KBM-7 (cell line): ENCODE measurements at regions of chr3 and their contacts with region 1.

Region 1: GRCh38 chr3:196047391-196048030 is 34.4 kb downstream of the TFRC start:
- DNase-seq: no peak

Region 2: GRCh38 chr3:196502775-196503195 is 455.3 kb after region 1 on chr3:
- in situ Hi-C with region 1: loop called (anchors 25 kb)
- DNase-seq: peak; percentile 68